Mammary epithelial cell (primary cell): ENCODE measurements at regions of chr7 and their contacts with region 1.

Region 1: DNA sequence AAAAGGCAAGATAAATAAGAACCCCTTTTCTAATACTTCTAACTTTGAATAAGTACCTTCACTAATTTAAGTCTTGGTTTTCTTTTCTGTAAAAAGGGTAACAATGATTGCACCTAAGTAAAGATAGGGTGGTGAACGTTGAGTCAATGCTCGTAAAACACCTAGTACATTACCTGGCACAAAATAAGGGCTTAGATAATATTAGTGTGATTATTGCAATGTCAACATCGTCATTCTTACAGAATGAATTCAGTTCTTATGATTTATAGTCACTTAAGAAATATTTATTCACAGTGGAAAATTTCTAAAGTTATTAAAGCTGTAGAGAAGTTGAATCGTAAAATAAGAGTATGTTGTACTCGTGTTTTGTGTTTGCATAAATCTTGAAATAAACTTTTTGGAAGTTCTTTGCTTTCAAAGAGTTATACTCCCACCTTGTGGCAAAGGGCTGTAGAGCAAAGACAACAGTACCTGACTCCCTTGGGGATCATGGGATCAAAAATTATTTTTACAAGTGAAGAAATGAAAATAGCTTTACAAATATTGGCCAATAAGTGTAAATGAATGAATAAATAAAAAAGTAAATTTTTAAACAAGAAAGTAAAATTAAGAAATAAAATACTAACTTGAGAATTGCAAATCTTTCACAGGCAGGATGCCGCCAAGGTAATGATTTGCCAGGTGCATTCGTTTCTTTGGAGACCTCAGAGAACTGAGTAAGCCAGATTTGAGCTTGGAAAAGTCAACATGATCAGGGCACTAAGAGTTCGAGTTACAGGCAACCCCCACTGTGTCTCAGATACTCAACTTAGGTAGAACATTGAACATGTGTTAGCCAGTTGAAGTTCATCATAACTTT is 285.8 kb upstream of the CACNA2D1 start:
- DNase-seq: peak; percentile 22
- H3K4me3 ChIP-seq: no peak overlapping the region
- H3K27ac ChIP-seq: no peak overlapping the region
- H3K4me1 ChIP-seq: no peaks in the 10 kb centered on the region
- H3K27me3 ChIP-seq: no peaks in the 10 kb centered on the region
- CTCF ChIP-seq: peak; percentile 67 to 82

Region 2: DNA sequence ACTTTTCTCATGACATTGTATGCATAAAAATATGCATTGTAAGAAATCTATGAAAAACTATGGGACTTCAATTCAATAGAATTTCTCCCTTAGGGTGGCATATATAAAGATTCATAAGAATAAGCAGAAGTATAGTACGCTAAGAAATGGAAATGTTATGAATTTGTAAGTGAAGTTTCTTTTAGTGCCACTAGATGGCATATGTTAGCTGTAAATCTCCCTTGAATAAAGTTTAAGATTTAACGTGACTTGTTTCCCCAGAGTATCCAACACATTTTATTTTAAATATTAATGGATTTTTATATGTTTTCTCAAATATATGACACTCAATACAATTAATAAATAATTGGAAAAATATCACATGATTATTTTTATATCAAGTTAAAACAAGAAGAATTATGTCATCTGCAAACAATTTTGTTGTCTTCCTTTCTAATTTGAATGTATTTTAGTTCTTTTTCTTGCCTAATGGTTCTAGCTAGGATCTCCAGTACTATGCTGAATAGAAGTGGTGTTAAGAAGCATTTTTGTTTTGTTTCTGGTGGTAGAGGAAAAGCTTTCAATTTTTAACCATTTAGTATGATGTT is 1246.7 kb before region 1 on chr7:
- CTCF ChIA-PET with region 1: no interaction called
- dilution Hi-C with region 1: no loop called
- in situ Hi-C with region 1: loop called in 1 of 2 experiments (anchors 25 kb)
- intact Hi-C with region 1: loop called (anchors 5 kb)
- DNase-seq: no peak
- H3K4me3 ChIP-seq: no peak overlapping the region
- H3K27ac ChIP-seq: no peak overlapping the region
- H3K4me1 ChIP-seq: no peaks in the 10 kb centered on the region
- H3K27me3 ChIP-seq: no peaks in the 10 kb centered on the region
- CTCF ChIP-seq: peak; percentile 42 to 57

Region 3: DNA sequence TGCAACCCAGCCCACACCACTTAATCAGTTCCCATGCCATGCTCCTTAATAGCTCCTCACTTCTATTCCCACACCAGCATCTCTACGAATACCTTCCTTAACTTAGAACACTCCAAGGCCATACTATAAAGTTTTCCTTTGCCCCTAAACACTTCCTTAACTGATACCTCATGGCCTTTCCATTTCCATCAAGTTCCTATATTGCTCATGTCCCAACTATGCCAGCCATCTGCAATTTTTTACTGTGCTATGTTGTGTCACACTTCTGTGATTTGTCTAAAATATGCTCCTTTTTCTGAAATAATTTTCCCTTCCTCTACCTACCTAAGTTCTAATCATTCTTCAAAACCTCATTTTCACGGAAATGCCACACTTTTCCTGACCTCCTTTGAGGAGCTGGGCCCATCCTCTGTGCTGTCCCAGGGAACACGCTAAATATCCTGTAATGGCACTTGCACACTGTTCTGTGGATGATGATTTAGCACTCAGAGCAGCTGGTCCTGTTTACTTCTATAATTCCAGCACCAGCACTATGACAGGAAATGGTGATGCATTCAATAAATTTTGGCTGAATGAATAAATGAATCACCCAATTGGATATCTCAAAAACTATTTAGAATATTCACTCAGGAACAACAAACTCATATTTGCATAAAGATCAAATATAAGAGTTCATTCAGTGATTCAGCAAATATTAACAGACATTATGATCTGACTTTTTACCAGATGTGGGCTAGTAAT is 693.1 kb before region 1 on chr7:
- CTCF ChIA-PET with region 1: no interaction called
- dilution Hi-C with region 1: no loop called
- in situ Hi-C with region 1: loop called (anchors 10 to 25 kb)
- intact Hi-C with region 1: no loop called
- DNase-seq: peak; percentile 14
- H3K4me3 ChIP-seq: no peak overlapping the region
- H3K27ac ChIP-seq: no peak overlapping the region
- H3K4me1 ChIP-seq: no peaks in the 10 kb centered on the region
- H3K27me3 ChIP-seq: no peaks in the 10 kb centered on the region
- CTCF ChIP-seq: no peak

Region 4: DNA sequence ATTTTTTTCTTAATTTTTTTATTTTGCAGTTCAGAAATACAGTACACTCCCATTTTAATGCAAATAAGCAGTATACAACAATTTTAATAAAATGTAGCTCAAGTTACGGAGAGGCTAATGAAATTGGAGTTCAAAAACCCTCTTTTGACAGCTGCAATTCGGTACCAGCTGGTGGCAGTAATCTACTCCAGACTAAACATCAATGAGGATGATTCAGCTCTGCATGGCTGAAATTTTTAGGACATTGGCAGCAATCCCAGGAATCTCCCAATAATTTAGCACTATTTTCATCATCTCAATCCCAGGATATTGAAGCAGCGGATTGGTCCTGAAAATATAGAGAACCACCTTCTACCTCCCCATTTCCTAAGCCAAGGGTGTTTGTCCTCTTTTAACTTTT is 564.6 kb before region 1 on chr7:
- CTCF ChIA-PET with region 1: no interaction called
- dilution Hi-C with region 1: no loop called
- in situ Hi-C with region 1: no loop called
- intact Hi-C with region 1: loop called (anchors 5 kb)
- DNase-seq: peak; percentile 6
- H3K4me3 ChIP-seq: no peak overlapping the region
- H3K27ac ChIP-seq: no peak overlapping the region
- H3K4me1 ChIP-seq: no peaks in the 10 kb centered on the region
- H3K27me3 ChIP-seq: peaks cover 2% of the 10 kb centered on the region
- CTCF ChIP-seq: peak; percentile 27 to 49

Region 5: DNA sequence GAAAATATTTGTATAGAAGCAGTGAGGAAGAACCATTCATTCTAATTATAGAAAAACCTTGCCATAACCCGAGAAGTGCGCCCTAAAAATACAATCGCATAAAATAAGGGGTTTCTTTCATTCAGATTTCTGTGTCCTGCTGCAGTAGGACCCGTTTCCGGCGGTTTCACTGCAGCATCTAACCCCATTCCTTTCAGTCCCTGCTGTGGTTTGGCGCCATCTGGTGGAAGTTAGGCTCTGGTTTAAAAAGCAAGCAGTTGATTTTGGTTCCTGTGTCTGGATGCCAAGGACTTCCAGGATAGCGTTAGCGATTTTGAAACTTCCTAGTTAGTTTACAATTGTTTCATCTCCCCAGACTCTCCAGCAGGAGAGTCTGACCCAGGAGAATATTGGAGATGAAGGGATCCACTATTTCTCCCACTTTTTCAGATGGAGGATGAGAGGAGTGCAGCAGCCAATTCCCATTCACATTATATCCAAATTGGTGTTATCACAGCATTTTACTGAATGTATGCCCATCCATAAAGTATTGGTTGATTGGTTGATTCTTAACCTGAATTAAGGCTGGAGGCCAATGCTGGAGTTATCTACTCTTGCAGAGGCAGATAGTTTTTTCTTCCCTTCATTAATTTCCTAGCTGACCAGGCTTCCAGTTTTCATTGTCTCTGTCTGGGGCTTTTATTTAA is 157.1 kb before region 1 on chr7:
- CTCF ChIA-PET with region 1: no interaction called
- dilution Hi-C with region 1: no loop called
- in situ Hi-C with region 1: no loop called
- intact Hi-C with region 1: loop called (anchors 2 kb)
- DNase-seq: peak; percentile 60
- H3K4me3 ChIP-seq: no peak overlapping the region
- H3K27ac ChIP-seq: no peak overlapping the region
- H3K4me1 ChIP-seq: no peaks in the 10 kb centered on the region
- H3K27me3 ChIP-seq: no peaks in the 10 kb centered on the region
- CTCF ChIP-seq: peak; percentile 85 to 95

Region 6: DNA sequence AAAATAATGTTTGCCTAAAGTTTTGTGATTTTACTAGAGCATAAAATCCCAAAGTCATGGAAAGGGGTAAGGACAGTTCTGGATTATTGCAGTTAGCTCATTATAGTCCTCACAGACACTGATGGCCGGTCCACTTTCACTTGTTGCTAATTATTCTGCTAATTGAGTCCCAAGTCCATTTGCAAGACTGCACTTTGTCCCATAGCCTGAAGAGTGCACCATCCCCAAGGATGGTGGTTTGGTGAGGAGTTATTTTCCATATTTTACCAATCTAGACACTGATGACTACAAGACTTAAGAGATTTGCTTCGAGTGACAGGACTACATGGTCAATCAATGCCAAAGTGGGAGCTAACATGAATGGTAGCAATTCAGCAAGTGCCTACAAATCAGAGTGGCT is 104.0 kb before region 1 on chr7:
- CTCF ChIA-PET with region 1: no interaction called
- dilution Hi-C with region 1: no loop called
- in situ Hi-C with region 1: no loop called
- intact Hi-C with region 1: loop called (anchors 5 kb)
- DNase-seq: no peak
- H3K4me3 ChIP-seq: no peak overlapping the region
- H3K27ac ChIP-seq: no peak overlapping the region
- H3K4me1 ChIP-seq: no peaks in the 10 kb centered on the region
- H3K27me3 ChIP-seq: no peaks in the 10 kb centered on the region
- CTCF ChIP-seq: peak in 1 of 2 donors; percentile 53